Activated CD4-positive, alpha-beta T cell treated with anti-CD3 and anti-CD28 coated beads, Interleukin-2, amount 10 ng/mL, durations not matched to agents 24 days and 14 days (primary cell): ENCODE measurements at regions of chr4 and their contacts with region 1.

Region 1: GRCh38 chr4:113657586-113658233 is 103.8 kb downstream of the CAMK2D start:
- DNase-seq: peak; percentile 46
- H3K4me3 Mint-ChIP-seq: no peak overlapping the region
- H3K27ac Mint-ChIP-seq: no peak overlapping the region
- H3K4me1 Mint-ChIP-seq: peaks cover 19% of the 10 kb centered on the region
- H3K27me3 Mint-ChIP-seq: no peaks in the 10 kb centered on the region

Region 2: GRCh38 chr4:113499696-113500095 is 158.0 kb before region 1 on chr4:
- intact Hi-C with region 1: no loop called
- DNase-seq: no peak
- H3K4me3 Mint-ChIP-seq: no peak overlapping the region
- H3K27ac Mint-ChIP-seq: no peak overlapping the region
- H3K4me1 Mint-ChIP-seq: no peaks in the 10 kb centered on the region
- H3K27me3 Mint-ChIP-seq: no peaks in the 10 kb centered on the region

Region 3: DNA sequence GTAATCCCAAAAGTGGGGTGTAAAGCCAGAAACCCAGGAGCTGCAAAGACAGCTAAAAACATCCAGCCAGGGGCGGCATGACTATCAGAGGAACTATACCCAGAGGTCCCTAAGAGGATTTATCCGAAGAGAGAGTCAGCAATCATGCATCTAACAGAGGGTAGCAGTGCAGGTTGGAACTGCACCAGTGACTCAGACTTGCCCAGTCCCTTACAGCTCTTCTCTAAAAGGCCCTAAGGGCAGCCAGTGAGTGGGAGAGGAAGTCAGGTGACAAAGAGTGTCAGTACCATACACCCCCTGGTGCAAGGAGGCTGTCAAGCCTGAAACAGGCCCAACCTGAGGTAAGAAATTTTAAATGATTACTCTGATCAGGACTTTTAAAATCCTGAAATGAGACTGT is 15.7 kb after region 1 on chr4:
- intact Hi-C with region 1: loop called (anchors 2 kb)
- DNase-seq: peak; percentile 71
- H3K4me3 Mint-ChIP-seq: peak overlapping the region; percentile 12
- H3K27ac Mint-ChIP-seq: peak overlapping the region; percentile 15
- H3K4me1 Mint-ChIP-seq: peaks cover 46% of the 10 kb centered on the region
- H3K27me3 Mint-ChIP-seq: no peaks in the 10 kb centered on the region